K562 (cell line): ENCODE measurements at regions of chr16 and their contacts with region 1.

Region 1: GRCh38 chr16:72066747-72067146 is 3.7 kb downstream of the HPR start:
- DNase-seq: peak; percentile 46 to 72 (median 54)
- ATAC-seq: peak; percentile 92
- H3K4me3 ChIP-seq: no peak overlapping the region
- H3K27ac ChIP-seq: no peak overlapping the region
- H3K4me1 ChIP-seq: peaks cover 0 to 4% of the 10 kb centered on the region in 2 experiments; a peak in 2 of 5 replicates
- H3K27me3 ChIP-seq: peaks cover 7 to 10% of the 10 kb centered on the region in 2 experiments; a peak in 4 of 5 replicates
- CTCF ChIP-seq: peak; percentile 59 to 84 (median 67)
- EP300 ChIP-seq: no peak
- POLR2A ChIP-seq: no peak
- RAD21 ChIP-seq: peak; percentile 79 to 91

Region 2: GRCh38 chr16:71537643-71538042 is 529.1 kb before region 1 on chr16:
- CTCF ChIA-PET with region 1: no interaction called
- POLR2A ChIA-PET with region 1: no interaction called
- in situ Hi-C with region 1: no loop called
- intact Hi-C with region 1: no loop called
- DNase-seq: peak; percentile 47 to 64 (median 55)
- ATAC-seq: peak; percentile 90
- H3K4me3 ChIP-seq: no peak overlapping the region
- H3K27ac ChIP-seq: no peak overlapping the region
- H3K4me1 ChIP-seq: no peaks in the 10 kb centered on the region
- H3K27me3 ChIP-seq: peaks cover 9 to 21% of the 10 kb centered on the region in 2 experiments
- CTCF ChIP-seq: peak; percentile 72 to 73 (median 72)
- EP300 ChIP-seq: no peak
- POLR2A ChIP-seq: no peak
- RAD21 ChIP-seq: peak; percentile 33 to 73

Region 3: GRCh38 chr16:72099377-72099818 is 32.7 kb after region 1 on chr16:
- CTCF ChIA-PET with region 1: interaction called, 22 read pairs
- POLR2A ChIA-PET with region 1: interaction called, 3 read pairs
- in situ Hi-C with region 1: loop called (anchors 5 kb)
- intact Hi-C with region 1: loop called (anchors 1 kb)
- DNase-seq: peak; percentile 57 to 72 (median 64)
- ATAC-seq: peak; percentile 95
- H3K4me3 ChIP-seq: no peak overlapping the region
- H3K27ac ChIP-seq: no peak overlapping the region
- H3K4me1 ChIP-seq: peaks cover 3% of the 10 kb centered on the region in 2 experiments; a peak in 1 of 5 replicates
- H3K27me3 ChIP-seq: no peaks in the 10 kb centered on the region
- CTCF ChIP-seq: peak; percentile 71 to 79 (median 73)
- EP300 ChIP-seq: no peak
- POLR2A ChIP-seq: no peak
- RAD21 ChIP-seq: peak; percentile 74 to 83

Region 4: GRCh38 chr16:72104905-72105304 is 38.2 kb after region 1 on chr16:
- CTCF ChIA-PET with region 1: interaction called, 22 read pairs
- POLR2A ChIA-PET with region 1: no interaction called
- in situ Hi-C with region 1: loop called (anchors 5 kb)
- intact Hi-C with region 1: no loop called
- DNase-seq: no peak
- ATAC-seq: no peak
- H3K4me3 ChIP-seq: no peak overlapping the region
- H3K27ac ChIP-seq: no peak overlapping the region
- H3K4me1 ChIP-seq: no peaks in the 10 kb centered on the region
- H3K27me3 ChIP-seq: no peaks in the 10 kb centered on the region
- CTCF ChIP-seq: no peak
- EP300 ChIP-seq: no peak
- POLR2A ChIP-seq: no peak
- RAD21 ChIP-seq: no peak

Region 5: DNA sequence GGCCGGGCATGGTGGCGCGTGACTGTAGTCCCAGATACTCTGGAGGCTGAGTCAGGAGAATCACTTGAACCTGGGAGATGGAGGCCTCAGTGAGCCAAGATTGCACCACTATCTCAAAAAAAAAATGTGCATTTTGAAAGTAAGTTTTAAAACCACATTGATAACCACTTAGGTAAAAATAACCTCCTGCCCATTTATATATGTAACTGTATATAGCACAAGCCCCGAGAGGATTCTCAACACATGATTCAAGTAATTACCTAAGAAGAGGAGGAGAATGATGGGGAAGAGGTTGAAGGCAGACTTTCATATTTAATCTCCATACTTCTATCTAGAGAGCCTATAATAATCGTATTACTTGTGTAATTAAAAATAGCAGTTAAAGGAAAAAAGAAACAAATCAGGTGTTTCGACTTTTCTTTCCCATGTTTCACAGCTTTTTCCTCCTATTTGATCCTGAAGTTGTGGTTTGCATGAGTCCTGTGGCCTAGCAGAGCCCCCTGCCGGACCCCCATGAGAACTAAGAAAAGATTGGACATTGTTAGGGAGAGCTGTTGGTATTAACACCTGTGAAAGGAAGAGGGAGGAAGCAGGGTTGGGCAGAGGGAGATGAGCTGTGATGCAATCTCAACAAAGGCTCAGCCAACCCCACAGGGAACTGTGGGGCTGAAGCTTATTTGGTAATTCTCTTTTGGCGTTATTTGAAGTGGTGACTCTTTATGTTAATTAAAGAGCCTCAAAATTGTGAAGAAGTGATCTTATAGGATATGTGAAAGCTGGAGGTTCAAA is 83.1 kb after region 1 on chr16:
- CTCF ChIA-PET with region 1: no interaction called
- POLR2A ChIA-PET with region 1: interaction called, 3 read pairs
- in situ Hi-C with region 1: no loop called
- intact Hi-C with region 1: loop called (anchors 10 kb)
- DNase-seq: peak in 2 of 4 experiments; percentile 24 to 25
- ATAC-seq: peak; percentile 70
- H3K4me3 ChIP-seq: no peak overlapping the region
- H3K27ac ChIP-seq: no peak overlapping the region
- H3K4me1 ChIP-seq: no peaks in the 10 kb centered on the region; a peak in 1 of 5 replicates
- H3K27me3 ChIP-seq: no peaks in the 10 kb centered on the region; a peak in 1 of 5 replicates
- CTCF ChIP-seq: peak; percentile 45 to 48 (median 46); a peak in 5 of 6 replicates
- EP300 ChIP-seq: no peak
- POLR2A ChIP-seq: no peak
- RAD21 ChIP-seq: peak in 1 of 2 experiments; percentile 59; a peak in 2 of 4 replicates

Region 6: GRCh38 chr16:72198021-72198711 is 131.4 kb after region 1 on chr16:
- CTCF ChIA-PET with region 1: no interaction called
- POLR2A ChIA-PET with region 1: no interaction called
- in situ Hi-C with region 1: no loop called
- intact Hi-C with region 1: no loop called
- DNase-seq: peak in 1 of 4 experiments; percentile 14
- ATAC-seq: no peak
- H3K4me3 ChIP-seq: no peak overlapping the region
- H3K27ac ChIP-seq: no peak overlapping the region
- H3K4me1 ChIP-seq: no peaks in the 10 kb centered on the region
- H3K27me3 ChIP-seq: peaks cover 4 to 22% of the 10 kb centered on the region in 2 experiments; a peak in 2 of 5 replicates
- CTCF ChIP-seq: no peak
- EP300 ChIP-seq: no peak
- POLR2A ChIP-seq: no peak
- RAD21 ChIP-seq: no peak

Region 7: GRCh38 chr16:72234387-72234786 is 167.6 kb after region 1 on chr16:
- CTCF ChIA-PET with region 1: no interaction called
- POLR2A ChIA-PET with region 1: no interaction called
- in situ Hi-C with region 1: no loop called
- intact Hi-C with region 1: no loop called
- DNase-seq: no peak
- ATAC-seq: no peak
- H3K4me3 ChIP-seq: no peak overlapping the region
- H3K27ac ChIP-seq: no peak overlapping the region
- H3K4me1 ChIP-seq: no peaks in the 10 kb centered on the region
- H3K27me3 ChIP-seq: no peaks in the 10 kb centered on the region
- CTCF ChIP-seq: no peak
- EP300 ChIP-seq: no peak
- POLR2A ChIP-seq: no peak
- RAD21 ChIP-seq: no peak

Region 8: GRCh38 chr16:72270531-72270930 is 203.8 kb after region 1 on chr16:
- CTCF ChIA-PET with region 1: no interaction called
- POLR2A ChIA-PET with region 1: no interaction called
- in situ Hi-C with region 1: no loop called
- intact Hi-C with region 1: no loop called
- DNase-seq: no peak
- ATAC-seq: no peak
- H3K4me3 ChIP-seq: no peak overlapping the region
- H3K27ac ChIP-seq: no peak overlapping the region
- H3K4me1 ChIP-seq: no peaks in the 10 kb centered on the region; a peak in 1 of 5 replicates
- H3K27me3 ChIP-seq: no peaks in the 10 kb centered on the region
- CTCF ChIP-seq: no peak
- EP300 ChIP-seq: no peak
- POLR2A ChIP-seq: no peak
- RAD21 ChIP-seq: no peak